ENCODE measurements at regions of chr18 and their contacts with region 1.

Region 1: DNA sequence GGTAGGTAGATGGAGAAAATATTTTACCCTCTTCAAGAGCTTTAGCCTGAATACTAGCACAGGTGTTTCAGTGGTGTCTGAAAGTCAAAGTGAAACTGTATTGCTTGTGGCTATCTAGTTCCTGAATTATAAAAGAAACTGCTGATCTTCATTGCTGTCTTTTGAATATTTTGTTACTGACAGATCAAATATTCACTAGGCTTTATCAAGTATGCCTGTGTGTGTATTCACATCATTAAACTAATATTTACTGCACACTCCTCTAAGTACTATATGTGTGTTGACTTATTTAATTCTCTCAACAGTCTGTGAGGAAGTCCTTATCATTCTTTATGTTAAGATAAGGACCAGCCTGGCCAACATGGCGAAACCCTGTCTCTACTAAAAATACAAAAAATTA is 139.6 kb downstream of the SOCS6 start:
- DNase-seq: peak; percentile 41
- ATAC-seq: peak; percentile 97
- H3K4me3 ChIP-seq: no peak overlapping the region
- H3K27ac ChIP-seq: no peak overlapping the region
- H3K4me1 ChIP-seq: peaks cover 13% of the 10 kb centered on the region; the same call in 1 of the 2 replicates
- H3K27me3 ChIP-seq: no peaks in the 10 kb centered on the region
- CTCF ChIP-seq: no peak
- EP300 ChIP-seq: no peak
- POLR2A ChIP-seq: no peak
- RAD21 ChIP-seq: no peak

Region 2: DNA sequence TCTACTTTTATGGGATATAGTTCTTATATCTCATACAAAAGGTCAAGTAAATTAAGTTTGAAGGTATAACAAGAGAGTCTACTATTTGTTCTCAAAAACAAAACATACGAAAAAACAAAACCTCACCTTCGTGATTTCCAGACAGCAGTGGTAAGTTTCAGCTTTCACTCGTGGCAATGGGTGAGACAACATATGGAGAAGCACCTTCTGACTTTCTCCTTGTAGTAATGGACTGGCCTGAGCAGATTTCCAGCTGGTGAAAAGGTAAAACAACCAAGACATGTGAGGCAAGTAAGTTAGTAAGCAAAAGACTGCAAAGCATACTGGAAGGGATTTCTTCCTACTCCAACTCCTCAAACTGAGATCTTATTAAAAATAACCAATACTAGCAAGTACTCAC is 262.5 kb before region 1 on chr18:
- CTCF ChIA-PET with region 1: interaction called, 51 read pairs
- POLR2A ChIA-PET with region 1: interaction called, 6 read pairs
- RAD21 ChIA-PET with region 1: no interaction called
- SMC1A ChIA-PET with region 1: interaction called, 10 read pairs
- in situ Hi-C with region 1: loop called (anchors 5 kb)
- intact Hi-C with region 1: no loop called
- DNase-seq: peak; percentile 36
- ATAC-seq: peak; percentile 86
- H3K4me3 ChIP-seq: no peak overlapping the region; the same call in 1 of the 2 replicates
- H3K27ac ChIP-seq: peak overlapping the region; percentile 38
- H3K4me1 ChIP-seq: 0 out of 2 replicates have a peak, but pooled peaks cover 3% of the 10 kb centered on the region
- H3K27me3 ChIP-seq: no peaks in the 10 kb centered on the region
- CTCF ChIP-seq: no peak
- EP300 ChIP-seq: no peak
- POLR2A ChIP-seq: no peak
- RAD21 ChIP-seq: no peak

Region 3: DNA sequence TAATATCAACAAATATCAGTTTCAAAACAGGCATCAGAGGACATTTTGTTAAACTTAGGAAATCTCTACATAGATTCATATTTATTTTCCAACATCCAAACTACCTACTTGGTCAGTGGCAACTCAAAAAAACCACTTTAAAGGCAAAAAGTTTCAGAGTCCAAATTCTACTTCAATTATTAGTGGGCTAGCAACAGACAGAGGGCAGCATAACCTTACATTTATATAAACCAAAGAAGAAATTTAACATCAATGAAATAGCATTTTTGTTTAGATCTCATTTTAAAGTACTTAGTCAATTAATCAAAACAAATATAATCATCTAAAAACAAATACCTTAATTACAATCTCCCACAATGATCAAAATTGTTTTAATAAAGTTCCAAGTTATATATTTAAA is 256.2 kb before region 1 on chr18:
- CTCF ChIA-PET with region 1: interaction called, 51 read pairs
- POLR2A ChIA-PET with region 1: interaction called, 6 read pairs
- RAD21 ChIA-PET with region 1: interaction called, 3 read pairs
- SMC1A ChIA-PET with region 1: interaction called, 10 read pairs
- in situ Hi-C with region 1: loop called (anchors 5 kb)
- intact Hi-C with region 1: no loop called
- DNase-seq: no peak
- ATAC-seq: peak; percentile 41; the same call in 1 of the 3 replicates
- H3K4me3 ChIP-seq: no peak overlapping the region
- H3K27ac ChIP-seq: no peak overlapping the region
- H3K4me1 ChIP-seq: no peaks in the 10 kb centered on the region
- H3K27me3 ChIP-seq: no peaks in the 10 kb centered on the region
- CTCF ChIP-seq: peak; percentile 13 to 52 (median 26); a peak in 4 of 6 replicates
- EP300 ChIP-seq: no peak
- POLR2A ChIP-seq: no peak
- RAD21 ChIP-seq: peak; percentile 65

Region 4: GRCh38 chr18:70288851-70289328 is 139.5 kb before region 1 on chr18 and contains the start of gene SOCS6:
- CTCF ChIA-PET with region 1: no interaction called
- POLR2A ChIA-PET with region 1: no interaction called
- RAD21 ChIA-PET with region 1: no interaction called
- SMC1A ChIA-PET with region 1: no interaction called
- in situ Hi-C with region 1: no loop called
- intact Hi-C with region 1: loop called (anchors 5 kb)
- DNase-seq: no peak
- ATAC-seq: peak; percentile 74
- H3K4me3 ChIP-seq: peak within 1 kb of the TSS; percentile 76
- H3K27ac ChIP-seq: peak within 1 kb of the TSS; percentile 52
- H3K4me1 ChIP-seq: peaks cover 5% of the 10 kb centered on the region
- H3K27me3 ChIP-seq: no peaks in the 10 kb centered on the region; a peak in 1 of 4 replicates
- CTCF ChIP-seq: no peak
- EP300 ChIP-seq: no peak
- POLR2A ChIP-seq: peak; percentile 85
- RAD21 ChIP-seq: no peak
- polyA plus RNA-seq, gene SOCS6: 1.6 to 1.8 TPM

Region 5: DNA sequence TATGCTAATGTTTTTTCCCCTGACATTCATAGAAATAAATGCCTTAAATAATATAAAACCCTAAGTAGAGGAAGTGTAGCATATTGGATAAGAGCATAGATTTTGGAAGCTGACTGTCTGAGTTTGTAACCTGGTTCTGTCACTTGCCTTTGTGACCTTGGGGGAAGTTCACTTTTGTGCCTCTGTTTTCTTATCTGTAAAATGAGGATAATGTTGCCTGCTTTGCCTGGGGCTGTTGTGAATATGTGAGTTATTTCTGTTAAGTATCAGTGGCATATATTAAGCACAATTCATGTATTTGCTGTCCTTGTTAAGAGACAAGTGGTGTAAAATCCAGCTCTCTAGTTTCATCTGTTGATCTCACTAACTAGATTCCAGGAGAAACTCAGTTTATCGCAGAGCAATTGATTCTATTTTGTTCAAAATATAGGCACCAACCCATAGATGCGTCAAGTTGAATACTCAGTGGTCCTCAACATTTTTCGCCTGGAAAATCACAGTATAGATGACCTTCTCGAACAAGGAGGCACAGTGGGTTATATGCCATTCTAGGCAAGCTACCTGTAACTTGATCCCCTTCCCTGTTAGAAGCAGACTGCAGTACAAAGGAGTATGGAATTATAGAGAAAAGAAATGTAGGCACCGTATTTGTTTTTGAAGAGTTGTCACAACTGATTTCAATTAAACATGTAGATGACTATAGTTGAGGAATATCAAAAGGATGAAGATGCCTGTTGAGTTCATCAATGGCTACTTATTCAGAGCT is 72.6 kb before region 1 on chr18:
- CTCF ChIA-PET with region 1: no interaction called
- POLR2A ChIA-PET with region 1: no interaction called
- RAD21 ChIA-PET with region 1: no interaction called
- SMC1A ChIA-PET with region 1: no interaction called
- in situ Hi-C with region 1: no loop called
- intact Hi-C with region 1: loop called (anchors 5 kb)
- DNase-seq: no peak
- ATAC-seq: no peak
- H3K4me3 ChIP-seq: no peak overlapping the region
- H3K27ac ChIP-seq: no peak overlapping the region
- H3K4me1 ChIP-seq: peaks cover 6% of the 10 kb centered on the region; the same call in 1 of the 2 replicates
- H3K27me3 ChIP-seq: no peaks in the 10 kb centered on the region
- CTCF ChIP-seq: no peak
- EP300 ChIP-seq: no peak
- POLR2A ChIP-seq: no peak
- RAD21 ChIP-seq: no peak

Region 6: GRCh38 chr18:70454704-70455322 is 26.4 kb after region 1 on chr18:
- CTCF ChIA-PET with region 1: interaction called, 18 read pairs
- POLR2A ChIA-PET with region 1: no interaction called
- RAD21 ChIA-PET with region 1: no interaction called
- SMC1A ChIA-PET with region 1: interaction called, 11 read pairs
- in situ Hi-C with region 1: no loop called
- intact Hi-C with region 1: no loop called
- DNase-seq: no peak
- ATAC-seq: peak; percentile 87
- H3K4me3 ChIP-seq: no peak overlapping the region
- H3K27ac ChIP-seq: no peak overlapping the region
- H3K4me1 ChIP-seq: no peaks in the 10 kb centered on the region
- H3K27me3 ChIP-seq: no peaks in the 10 kb centered on the region; a peak in 1 of 4 replicates
- CTCF ChIP-seq: peak; percentile 64 to 72 (median 70); a peak in 5 of 6 replicates
- EP300 ChIP-seq: no peak
- POLR2A ChIP-seq: no peak
- RAD21 ChIP-seq: peak; percentile 68

Measured in GM12878 (cell line).